Dorsolateral prefrontal cortex (tissue), 120 donors: ENCODE measurements at regions of chr14 and their contacts with region 1.

Region 1: GRCh38 chr14:93219103-93219726 is 12.2 kb downstream of the UBR7 start:
- DNase-seq: peak in 1 of 10 donors; percentile 20
- H3K4me3 ChIP-seq: no peak overlapping the region
- H3K27ac ChIP-seq: no peak overlapping the region
- H3K27me3 ChIP-seq: no peaks in the 10 kb centered on the region
- CTCF ChIP-seq: peak in 49 of 56 donors; percentile 18 to 63 (median 47)

Region 2: DNA sequence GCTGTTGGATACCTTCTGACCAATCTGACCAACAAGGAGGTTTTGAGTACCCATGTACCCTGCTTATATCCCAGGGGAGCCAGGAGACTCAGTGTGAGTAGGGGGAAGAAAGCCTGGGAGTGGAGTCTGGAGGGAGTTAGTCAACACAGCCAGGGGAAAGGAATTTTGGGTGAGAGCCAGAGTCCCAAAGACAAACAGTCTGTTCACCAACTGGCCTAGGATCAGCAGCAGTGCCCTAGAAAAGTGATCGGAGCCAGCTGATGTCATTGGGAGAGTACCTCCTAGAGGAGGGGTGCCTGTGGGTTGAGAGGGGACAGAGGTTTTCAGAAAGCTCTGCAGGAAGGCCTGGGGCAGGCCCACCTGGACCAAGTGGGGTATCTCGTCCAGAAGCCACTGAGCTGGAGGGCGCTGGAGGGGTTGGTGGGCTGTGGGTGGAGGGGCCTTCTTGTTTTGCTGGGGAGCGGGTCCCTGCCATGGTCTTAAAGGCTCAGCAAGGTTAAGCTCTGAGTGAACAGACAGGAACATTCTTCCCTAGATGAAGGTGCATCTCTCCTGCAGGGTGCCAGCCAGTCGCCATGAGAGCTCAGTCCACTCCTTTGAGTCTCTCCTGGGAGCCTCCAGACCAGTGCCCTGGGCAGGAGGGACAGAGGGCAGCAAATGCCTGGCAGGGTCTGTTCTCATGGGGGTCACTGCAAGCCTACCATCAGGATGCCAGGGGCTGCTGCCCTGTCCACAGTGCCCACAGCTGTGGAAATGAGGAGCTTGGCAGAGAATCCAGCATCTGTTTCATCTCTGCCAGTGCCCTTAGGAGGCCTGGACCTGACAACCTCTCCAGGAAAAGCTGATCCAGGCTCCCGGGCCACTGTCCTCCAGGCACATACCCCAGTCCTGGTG is 232.7 kb before region 1 on chr14:
- intact Hi-C with region 1: no loop called
- DNase-seq: peak in 3 of 10 donors; percentile 23 to 41 (median 32)
- H3K4me3 ChIP-seq: no peak overlapping the region
- H3K27ac ChIP-seq: peak overlapping the region in 47 of 59 donors; percentile 1 to 79 (median 52)
- H3K27me3 ChIP-seq: no peaks in the 10 kb centered on the region
- CTCF ChIP-seq: no peak

Region 3: DNA sequence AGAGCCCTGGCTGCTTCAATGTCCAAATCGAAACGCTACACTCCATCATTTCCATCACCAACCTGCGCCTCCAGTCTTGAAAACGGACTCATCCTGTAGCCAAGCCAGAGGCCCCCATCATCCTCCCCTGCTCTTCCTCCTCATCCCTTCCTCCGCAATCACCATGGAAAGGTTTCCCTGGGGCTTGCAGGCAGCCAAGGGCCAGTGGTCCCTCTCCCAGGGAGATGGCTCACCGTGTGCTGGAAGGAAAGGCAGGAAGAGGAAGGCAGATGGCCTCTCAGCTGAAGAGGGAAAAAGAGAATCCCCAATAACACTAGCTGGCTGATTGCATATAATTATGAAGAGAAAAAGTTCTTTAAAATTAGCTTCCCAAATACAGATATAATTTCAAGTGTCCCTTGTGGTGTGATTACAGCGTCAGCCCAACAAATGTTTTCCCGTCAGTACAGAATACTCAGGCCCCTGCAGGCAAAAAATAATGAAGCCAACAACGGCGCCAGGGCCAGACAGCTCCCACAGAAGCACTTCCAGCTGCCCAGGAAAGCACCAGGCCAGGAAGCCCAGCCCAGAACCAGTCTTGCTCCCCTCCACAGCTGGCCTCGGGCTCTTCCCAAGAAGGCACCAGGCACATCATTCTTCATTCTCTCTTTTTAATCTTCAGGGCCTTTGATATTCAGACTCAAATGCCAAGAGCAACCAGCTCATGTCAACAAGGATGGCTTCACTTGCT is 128.2 kb before region 1 on chr14:
- intact Hi-C with region 1: no loop called
- DNase-seq: peak in 6 of 10 donors; percentile 48 to 65 (median 52)
- H3K4me3 ChIP-seq: no peak overlapping the region
- H3K27ac ChIP-seq: peak overlapping the region in 58 of 59 donors; percentile 19 to 89 (median 78)
- H3K27me3 ChIP-seq: no peaks in the 10 kb centered on the region
- CTCF ChIP-seq: peak in 1 of 56 donors; percentile 9

Region 4: DNA sequence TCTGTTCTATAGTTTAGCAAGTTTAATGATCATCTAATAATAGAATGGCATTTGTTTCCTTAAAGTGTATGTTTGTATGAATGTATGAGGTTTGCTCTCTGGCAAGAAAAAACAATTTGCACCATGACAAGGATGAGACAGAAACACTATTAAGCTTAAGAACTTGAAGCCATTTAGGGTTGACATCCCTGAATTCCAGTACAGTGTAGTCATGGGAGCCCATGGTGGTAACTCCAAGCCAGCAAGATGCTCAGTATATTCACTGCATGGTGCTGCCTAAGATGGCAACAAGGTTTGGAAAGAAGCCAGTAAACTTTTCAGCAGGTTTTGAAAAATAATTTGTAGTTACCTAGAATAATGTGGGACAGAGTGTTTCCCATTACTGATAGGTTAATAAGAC is 410.4 kb after region 1 on chr14:
- intact Hi-C with region 1: loop called in 1 of 2 experiments (anchors 10 kb)
- DNase-seq: no peak
- H3K4me3 ChIP-seq: no peak overlapping the region
- H3K27ac ChIP-seq: no peak overlapping the region
- H3K27me3 ChIP-seq: no peaks in the 10 kb centered on the region
- CTCF ChIP-seq: no peak